CD4-positive, alpha-beta T cell (primary cell): ENCODE measurements at regions of chr12 and their contacts with region 1.

Region 1: GRCh38 chr12:25386831-25387731 is 136.4 kb upstream of the KRAS start:
- DNase-seq: peak; percentile 60 to 91 (median 69)
- ATAC-seq: peak; percentile 6
- H3K4me3 ChIP-seq: peak overlapping the region; percentile 75
- H3K4me3 Mint-ChIP-seq: peak overlapping the region; percentile 97
- H3K27ac ChIP-seq: peak overlapping the region; percentile 100
- H3K27ac Mint-ChIP-seq: peak overlapping the region; percentile 99
- H3K4me1 ChIP-seq: peaks cover 32% of the 10 kb centered on the region
- H3K4me1 Mint-ChIP-seq: peaks cover 47% of the 10 kb centered on the region
- H3K27me3 ChIP-seq: no peaks in the 10 kb centered on the region
- H3K27me3 Mint-ChIP-seq: peaks cover 6% of the 10 kb centered on the region
- CTCF ChIP-seq: peak; percentile 85

Region 2: GRCh38 chr12:24222968-24223367 is 1164.1 kb before region 1 on chr12:
- CTCF ChIA-PET with region 1: no interaction called
- POLR2A ChIA-PET with region 1: no interaction called
- intact Hi-C with region 1: no loop called
- DNase-seq: no peak
- ATAC-seq: no peak
- H3K4me3 ChIP-seq: no peak overlapping the region
- H3K4me3 Mint-ChIP-seq: no peak overlapping the region
- H3K27ac ChIP-seq: no peak overlapping the region
- H3K27ac Mint-ChIP-seq: no peak overlapping the region
- H3K4me1 ChIP-seq: no peaks in the 10 kb centered on the region
- H3K4me1 Mint-ChIP-seq: no peaks in the 10 kb centered on the region
- H3K27me3 ChIP-seq: no peaks in the 10 kb centered on the region
- H3K27me3 Mint-ChIP-seq: no peaks in the 10 kb centered on the region
- CTCF ChIP-seq: no peak

Region 3: GRCh38 chr12:24991209-24992049 is 395.7 kb before region 1 on chr12:
- CTCF ChIA-PET with region 1: no interaction called
- POLR2A ChIA-PET with region 1: no interaction called
- intact Hi-C with region 1: loop called in 1 of 2 experiments (anchors 2 kb)
- DNase-seq: peak in 6 of 14 experiments; percentile 1 to 82 (median 42)
- ATAC-seq: peak; percentile 97
- H3K4me3 ChIP-seq: no peak overlapping the region
- H3K4me3 Mint-ChIP-seq: no peak overlapping the region
- H3K27ac ChIP-seq: no peak overlapping the region
- H3K27ac Mint-ChIP-seq: no peak overlapping the region
- H3K4me1 ChIP-seq: no peaks in the 10 kb centered on the region
- H3K4me1 Mint-ChIP-seq: no peaks in the 10 kb centered on the region
- H3K27me3 ChIP-seq: no peaks in the 10 kb centered on the region
- H3K27me3 Mint-ChIP-seq: no peaks in the 10 kb centered on the region
- CTCF ChIP-seq: peak; percentile 67

Region 4: DNA sequence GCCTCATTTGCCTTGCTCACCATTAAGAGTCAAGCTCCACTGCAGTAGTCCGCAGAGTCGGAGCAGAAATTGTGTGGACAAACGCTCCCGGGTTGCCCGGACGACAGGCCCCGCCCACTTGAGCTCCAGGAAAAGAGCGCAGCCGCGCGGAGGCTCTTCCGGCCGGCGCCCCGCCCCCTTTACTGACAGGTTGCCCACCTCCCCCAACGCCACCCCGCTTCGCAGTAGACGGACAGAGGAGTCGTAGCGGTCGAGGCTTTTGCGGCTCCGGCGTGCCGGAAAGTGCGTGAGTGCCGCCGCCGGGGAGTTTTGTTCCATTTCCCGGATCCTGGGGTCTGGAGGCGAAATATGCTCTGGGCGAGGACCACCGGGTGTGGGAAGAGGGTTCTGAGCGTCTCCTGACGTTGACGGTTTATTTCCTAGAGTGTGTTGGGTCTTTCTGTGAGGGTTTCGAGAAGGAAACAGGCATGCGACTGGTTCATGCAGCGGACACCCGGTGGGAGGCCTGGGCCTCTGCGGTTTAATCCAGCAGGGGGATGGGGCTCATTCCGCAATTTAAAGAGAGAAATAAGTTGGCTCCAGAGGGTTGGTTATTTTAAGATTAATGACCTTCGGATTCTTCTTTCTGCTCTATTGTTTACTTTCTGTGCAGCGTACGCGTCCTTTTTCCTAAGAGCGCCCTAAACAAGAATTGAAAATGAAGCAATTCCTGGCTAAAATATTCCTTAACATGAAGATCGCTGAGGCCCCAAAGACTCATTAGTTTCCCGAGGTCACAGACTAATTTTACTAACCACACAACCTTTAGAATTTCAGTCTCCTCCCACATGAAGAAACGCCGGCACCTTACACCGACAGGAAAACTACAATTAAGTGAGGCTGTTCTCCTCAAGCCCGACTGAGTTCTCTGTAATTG is 191.8 kb before region 1 on chr12 and contains the starts of genes DNAI7 and ETFRF1:
- CTCF ChIA-PET with region 1: interaction called, 4 read pairs
- POLR2A ChIA-PET with region 1: interaction called, 5 read pairs
- intact Hi-C with region 1: loop called in 1 of 2 experiments (anchors 1 kb)
- DNase-seq: peak; percentile 89 to 98 (median 95)
- ATAC-seq: peak; percentile 94
- H3K4me3 ChIP-seq: peak within 1 kb of the TSS; percentile 90
- H3K4me3 Mint-ChIP-seq: peak within 1 kb of the TSS; percentile 98
- H3K27ac ChIP-seq: peak within 1 kb of the TSS; percentile 92 to 96
- H3K27ac Mint-ChIP-seq: peak within 1 kb of the TSS; percentile 98
- H3K4me1 ChIP-seq: peaks cover 14% of the 10 kb centered on the region
- H3K4me1 Mint-ChIP-seq: peaks cover 51% of the 10 kb centered on the region
- H3K27me3 ChIP-seq: no peaks in the 10 kb centered on the region
- H3K27me3 Mint-ChIP-seq: no peaks in the 10 kb centered on the region
- CTCF ChIP-seq: no peak
- total RNA-seq, gene DNAI7: 0.36 TPM in 1 of 2 experiments, not detected in the other
- total RNA-seq, gene ETFRF1: 32.9 to 39.8 TPM

Region 5: DNA sequence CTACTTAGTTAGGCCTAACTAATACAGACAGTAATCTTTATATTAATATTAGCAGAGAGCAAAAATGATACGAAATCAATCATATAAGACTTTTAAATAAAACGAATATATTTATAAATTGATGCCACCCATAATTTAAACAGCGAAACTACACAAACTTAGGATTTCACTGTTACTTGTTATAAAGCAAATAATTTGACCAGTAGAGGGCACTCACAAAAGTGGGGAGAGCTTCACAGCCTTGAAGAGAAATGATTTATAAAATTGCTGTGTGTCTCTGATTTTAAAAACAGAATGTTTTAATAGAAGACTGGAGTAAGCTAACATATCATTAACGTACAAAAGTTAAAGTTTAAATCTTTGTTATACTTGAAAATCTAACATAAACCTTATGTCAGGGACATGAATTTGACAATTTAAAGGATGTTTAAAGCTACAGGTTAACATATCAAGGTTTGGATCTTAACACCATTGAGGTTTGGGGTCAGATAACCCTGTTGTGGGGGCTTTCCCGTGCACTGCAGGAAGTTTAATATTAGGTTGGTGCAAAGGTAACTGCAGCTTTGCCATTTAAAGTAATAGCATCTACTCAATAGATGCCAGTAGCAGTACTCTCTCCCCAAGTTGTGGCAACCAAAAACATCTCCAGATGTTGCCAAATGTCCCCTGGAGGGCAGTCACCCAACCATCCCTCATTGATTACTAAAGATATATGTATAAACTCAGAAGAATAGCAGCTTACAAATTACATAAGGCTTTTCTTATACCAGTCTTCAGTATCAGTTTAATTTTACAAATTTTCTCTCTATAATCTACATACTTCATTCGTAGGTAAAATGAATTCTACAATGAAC is 145.7 kb before region 1 on chr12:
- CTCF ChIA-PET with region 1: interaction called, 15 read pairs
- POLR2A ChIA-PET with region 1: interaction called, 8 read pairs
- intact Hi-C with region 1: loop called (anchors 1 kb)
- DNase-seq: peak in 4 of 14 experiments; percentile 1 to 77 (median 74)
- ATAC-seq: peak; percentile 79
- H3K4me3 ChIP-seq: no peak overlapping the region
- H3K4me3 Mint-ChIP-seq: no peak overlapping the region
- H3K27ac ChIP-seq: peak overlapping the region in 1 of 2 donors; percentile 25
- H3K27ac Mint-ChIP-seq: peak overlapping the region; percentile 24
- H3K4me1 ChIP-seq: peaks cover 5% of the 10 kb centered on the region
- H3K4me1 Mint-ChIP-seq: peaks cover 51% of the 10 kb centered on the region
- H3K27me3 ChIP-seq: no peaks in the 10 kb centered on the region
- H3K27me3 Mint-ChIP-seq: no peaks in the 10 kb centered on the region
- CTCF ChIP-seq: peak; percentile 82

Region 6: DNA sequence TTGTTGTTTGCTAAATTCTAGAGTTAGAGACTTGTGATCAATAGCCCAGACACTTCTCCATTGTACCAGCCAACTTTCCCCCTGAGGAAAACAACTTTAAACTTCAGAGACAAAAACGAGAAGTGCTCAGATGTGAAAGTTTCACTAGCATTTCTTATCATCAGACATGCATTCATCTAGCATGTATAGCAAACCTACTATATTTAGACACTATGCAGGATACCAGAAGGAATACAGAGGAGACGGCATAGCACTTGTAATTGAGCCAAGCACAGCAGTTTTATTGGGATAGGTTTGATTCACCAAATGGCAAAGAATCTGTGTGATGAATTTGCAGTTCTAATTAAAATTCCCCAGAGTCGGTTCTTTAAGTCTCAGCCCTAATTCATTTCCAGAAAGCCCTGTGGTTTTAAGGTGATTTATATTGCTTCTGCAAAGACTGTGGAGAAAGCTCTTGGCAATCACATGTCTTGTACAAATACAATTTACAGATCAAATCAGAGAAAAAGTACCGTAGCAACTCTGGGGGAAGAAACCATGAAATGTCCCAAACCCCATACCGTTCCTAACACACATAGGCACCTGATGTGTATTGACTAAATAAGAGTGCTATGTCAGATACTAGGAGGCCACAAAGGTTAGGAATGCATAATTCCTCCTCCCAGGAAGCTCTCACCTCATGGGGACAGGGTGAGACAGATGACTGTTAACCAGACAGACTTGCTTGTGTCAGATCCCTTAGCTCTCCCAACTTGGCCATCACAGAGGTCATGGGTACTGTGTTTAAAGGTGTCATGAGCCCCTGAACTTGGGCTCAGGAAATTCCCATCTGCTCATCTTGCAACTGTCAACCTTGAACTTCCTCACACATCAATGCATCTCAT is 66.7 kb before region 1 on chr12:
- CTCF ChIA-PET with region 1: interaction called, 3 read pairs
- POLR2A ChIA-PET with region 1: interaction called, 10 read pairs
- intact Hi-C with region 1: no loop called
- DNase-seq: no peak
- ATAC-seq: no peak
- H3K4me3 ChIP-seq: no peak overlapping the region
- H3K4me3 Mint-ChIP-seq: no peak overlapping the region
- H3K27ac ChIP-seq: no peak overlapping the region
- H3K27ac Mint-ChIP-seq: no peak overlapping the region
- H3K4me1 ChIP-seq: peaks cover 25% of the 10 kb centered on the region
- H3K4me1 Mint-ChIP-seq: peaks cover 48% of the 10 kb centered on the region
- H3K27me3 ChIP-seq: no peaks in the 10 kb centered on the region
- H3K27me3 Mint-ChIP-seq: no peaks in the 10 kb centered on the region
- CTCF ChIP-seq: no peak

Region 7: DNA sequence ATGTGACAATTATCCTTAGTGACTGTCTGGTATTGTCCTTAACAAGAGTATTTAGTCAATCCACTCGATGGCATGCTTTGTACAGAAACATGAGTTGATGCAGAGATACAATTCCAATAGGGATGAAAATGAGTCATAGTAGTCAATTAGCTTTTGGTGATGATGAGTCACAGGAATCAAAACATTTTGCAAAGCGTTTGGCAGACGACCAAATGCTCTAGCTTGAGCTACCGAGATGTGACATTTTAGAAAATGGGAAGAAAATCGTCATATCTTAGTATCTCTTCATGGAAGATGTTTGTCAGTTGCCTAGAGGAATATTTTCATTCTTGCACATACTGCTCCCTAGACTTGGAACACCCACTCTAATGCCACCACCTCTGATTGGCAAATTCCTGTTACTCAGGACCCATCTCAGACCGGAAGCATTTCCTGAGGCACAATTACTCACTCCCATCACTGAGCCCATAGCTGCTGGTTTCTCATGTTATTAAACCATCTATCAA is 71.0 kb after region 1 on chr12:
- CTCF ChIA-PET with region 1: no interaction called
- POLR2A ChIA-PET with region 1: no interaction called
- intact Hi-C with region 1: no loop called
- DNase-seq: no peak
- ATAC-seq: no peak
- H3K4me3 ChIP-seq: no peak overlapping the region
- H3K4me3 Mint-ChIP-seq: no peak overlapping the region
- H3K27ac ChIP-seq: no peak overlapping the region
- H3K27ac Mint-ChIP-seq: no peak overlapping the region
- H3K4me1 ChIP-seq: no peaks in the 10 kb centered on the region
- H3K4me1 Mint-ChIP-seq: no peaks in the 10 kb centered on the region
- H3K27me3 ChIP-seq: no peaks in the 10 kb centered on the region
- H3K27me3 Mint-ChIP-seq: peaks cover 5% of the 10 kb centered on the region
- CTCF ChIP-seq: no peak